CD8-positive, alpha-beta T cell (primary cell): ENCODE measurements at regions of chr3 and their contacts with region 1.

Region 1: GRCh38 chr3:195850857-195851543 is 39.3 kb upstream of the MUC4 start:
- DNase-seq: peak; percentile 76 to 93 (median 88)
- ATAC-seq: peak; percentile 100
- H3K4me3 ChIP-seq: no peak overlapping the region
- H3K4me3 Mint-ChIP-seq: peak overlapping the region; percentile 16
- H3K27ac ChIP-seq: no peak overlapping the region
- H3K27ac Mint-ChIP-seq: no peak overlapping the region
- H3K4me1 ChIP-seq: no peaks in the 10 kb centered on the region
- H3K4me1 Mint-ChIP-seq: peaks cover 7% of the 10 kb centered on the region
- H3K27me3 ChIP-seq: no peaks in the 10 kb centered on the region
- H3K27me3 Mint-ChIP-seq: no peaks in the 10 kb centered on the region
- CTCF ChIP-seq: peak; percentile 100

Region 2: DNA sequence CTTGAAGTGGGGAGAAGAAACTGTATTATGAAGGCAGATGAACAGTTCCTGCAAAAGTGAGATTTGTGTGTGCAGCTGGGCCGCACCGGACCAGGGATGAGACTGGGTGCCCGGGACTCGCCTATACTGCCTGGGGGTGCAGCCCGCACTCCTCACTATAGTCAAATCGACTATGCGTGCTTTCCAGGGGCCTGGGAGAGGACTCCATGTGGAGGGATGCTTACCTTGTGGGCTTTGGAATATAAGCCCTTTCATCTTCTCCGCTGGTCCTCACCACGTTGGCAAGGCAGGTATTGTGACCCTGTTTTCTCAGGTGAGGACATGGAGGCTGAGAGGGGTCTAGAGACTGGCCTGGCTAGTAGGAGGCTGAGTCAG is 234.3 kb before region 1 on chr3:
- CTCF ChIA-PET with region 1: interaction called, 3 read pairs
- POLR2A ChIA-PET with region 1: no interaction called
- intact Hi-C with region 1: loop called (anchors 10 kb)
- DNase-seq: no peak
- ATAC-seq: no peak
- H3K4me3 ChIP-seq: no peak overlapping the region
- H3K4me3 Mint-ChIP-seq: no peak overlapping the region
- H3K27ac ChIP-seq: no peak overlapping the region
- H3K27ac Mint-ChIP-seq: no peak overlapping the region
- H3K4me1 ChIP-seq: peaks cover 15% of the 10 kb centered on the region
- H3K4me1 Mint-ChIP-seq: peaks cover 20% of the 10 kb centered on the region
- H3K27me3 ChIP-seq: no peaks in the 10 kb centered on the region
- H3K27me3 Mint-ChIP-seq: no peaks in the 10 kb centered on the region
- CTCF ChIP-seq: no peak

Region 3: GRCh38 chr3:195863121-195864006 is 12.4 kb after region 1 on chr3:
- CTCF ChIA-PET with region 1: interaction called, 15 read pairs
- POLR2A ChIA-PET with region 1: no interaction called
- intact Hi-C with region 1: no loop called
- DNase-seq: peak; percentile 36 to 77 (median 66)
- ATAC-seq: peak; percentile 78
- H3K4me3 ChIP-seq: no peak overlapping the region
- H3K4me3 Mint-ChIP-seq: no peak overlapping the region
- H3K27ac ChIP-seq: no peak overlapping the region
- H3K27ac Mint-ChIP-seq: no peak overlapping the region
- H3K4me1 ChIP-seq: peaks cover 4% of the 10 kb centered on the region
- H3K4me1 Mint-ChIP-seq: peaks cover 4% of the 10 kb centered on the region
- H3K27me3 ChIP-seq: no peaks in the 10 kb centered on the region
- H3K27me3 Mint-ChIP-seq: no peaks in the 10 kb centered on the region
- CTCF ChIP-seq: peak; percentile 57

Region 4: DNA sequence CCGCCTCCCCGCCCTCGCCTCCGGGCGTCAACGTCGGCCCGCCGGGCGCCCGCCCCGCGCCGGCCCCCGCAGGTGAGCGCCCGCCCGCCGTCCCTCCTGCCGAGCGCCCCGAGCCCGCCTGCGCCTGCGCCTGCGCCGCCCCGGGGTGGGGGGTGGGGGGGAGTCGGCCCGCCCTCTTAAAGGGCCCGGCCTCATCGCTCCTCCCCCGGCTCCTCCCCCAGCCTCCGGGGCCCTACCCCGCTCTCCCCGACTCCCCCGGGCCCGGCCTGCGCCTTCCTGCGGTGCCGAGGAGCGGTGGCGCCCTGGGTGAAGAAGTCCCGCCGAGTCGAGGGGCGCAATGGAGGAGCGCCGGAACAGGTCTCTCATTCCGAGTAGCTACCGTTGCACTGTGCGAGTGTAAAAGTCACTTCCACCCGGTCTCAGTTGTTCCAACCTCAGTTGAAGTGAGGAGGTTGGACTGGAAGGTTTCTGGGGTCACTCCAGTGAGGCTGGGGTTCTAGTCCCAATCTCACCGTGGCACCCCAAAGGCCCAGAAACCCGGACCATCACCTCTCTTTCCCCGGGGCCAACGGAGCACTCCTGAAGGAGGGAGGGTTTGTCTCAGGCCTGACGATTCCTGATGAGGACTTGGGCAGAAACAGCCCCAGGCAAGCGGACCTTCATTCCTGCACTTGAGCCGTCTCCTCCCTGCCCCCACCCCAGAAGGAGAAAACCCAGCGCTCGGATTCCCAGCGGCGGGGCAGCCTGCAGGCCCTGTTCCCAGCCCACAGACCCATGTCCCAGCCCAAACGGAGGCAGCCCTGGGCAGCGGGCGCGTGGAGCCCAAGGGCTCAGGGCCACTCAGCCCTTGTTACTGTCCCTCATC is 58.9 kb after region 1 on chr3:
- CTCF ChIA-PET with region 1: interaction called, 208 read pairs
- POLR2A ChIA-PET with region 1: interaction called, 4 read pairs
- intact Hi-C with region 1: no loop called
- DNase-seq: peak; percentile 79 to 95 (median 90)
- ATAC-seq: peak; percentile 61
- H3K4me3 ChIP-seq: peak overlapping the region; percentile 32 to 52
- H3K4me3 Mint-ChIP-seq: peak overlapping the region; percentile 77
- H3K27ac ChIP-seq: peak overlapping the region; percentile 35 to 51
- H3K27ac Mint-ChIP-seq: peak overlapping the region; percentile 78
- H3K4me1 ChIP-seq: peaks cover 37% of the 10 kb centered on the region
- H3K4me1 Mint-ChIP-seq: peaks cover 36% of the 10 kb centered on the region
- H3K27me3 ChIP-seq: no peaks in the 10 kb centered on the region
- H3K27me3 Mint-ChIP-seq: no peaks in the 10 kb centered on the region
- CTCF ChIP-seq: no peak

Region 5: GRCh38 chr3:196159952-196160804 is 309.2 kb after region 1 on chr3:
- CTCF ChIA-PET with region 1: no interaction called
- POLR2A ChIA-PET with region 1: no interaction called
- intact Hi-C with region 1: no loop called
- DNase-seq: peak in 5 of 9 experiments; percentile 12 to 72 (median 40)
- ATAC-seq: peak; percentile 72
- H3K4me3 ChIP-seq: no peak overlapping the region
- H3K4me3 Mint-ChIP-seq: no peak overlapping the region
- H3K27ac ChIP-seq: no peak overlapping the region
- H3K27ac Mint-ChIP-seq: no peak overlapping the region
- H3K4me1 ChIP-seq: no peaks in the 10 kb centered on the region
- H3K4me1 Mint-ChIP-seq: peaks cover 9% of the 10 kb centered on the region
- H3K27me3 ChIP-seq: no peaks in the 10 kb centered on the region
- H3K27me3 Mint-ChIP-seq: no peaks in the 10 kb centered on the region
- CTCF ChIP-seq: no peak